ENCODE measurements at regions of chr11 and their contacts with region 1.

Region 1: DNA sequence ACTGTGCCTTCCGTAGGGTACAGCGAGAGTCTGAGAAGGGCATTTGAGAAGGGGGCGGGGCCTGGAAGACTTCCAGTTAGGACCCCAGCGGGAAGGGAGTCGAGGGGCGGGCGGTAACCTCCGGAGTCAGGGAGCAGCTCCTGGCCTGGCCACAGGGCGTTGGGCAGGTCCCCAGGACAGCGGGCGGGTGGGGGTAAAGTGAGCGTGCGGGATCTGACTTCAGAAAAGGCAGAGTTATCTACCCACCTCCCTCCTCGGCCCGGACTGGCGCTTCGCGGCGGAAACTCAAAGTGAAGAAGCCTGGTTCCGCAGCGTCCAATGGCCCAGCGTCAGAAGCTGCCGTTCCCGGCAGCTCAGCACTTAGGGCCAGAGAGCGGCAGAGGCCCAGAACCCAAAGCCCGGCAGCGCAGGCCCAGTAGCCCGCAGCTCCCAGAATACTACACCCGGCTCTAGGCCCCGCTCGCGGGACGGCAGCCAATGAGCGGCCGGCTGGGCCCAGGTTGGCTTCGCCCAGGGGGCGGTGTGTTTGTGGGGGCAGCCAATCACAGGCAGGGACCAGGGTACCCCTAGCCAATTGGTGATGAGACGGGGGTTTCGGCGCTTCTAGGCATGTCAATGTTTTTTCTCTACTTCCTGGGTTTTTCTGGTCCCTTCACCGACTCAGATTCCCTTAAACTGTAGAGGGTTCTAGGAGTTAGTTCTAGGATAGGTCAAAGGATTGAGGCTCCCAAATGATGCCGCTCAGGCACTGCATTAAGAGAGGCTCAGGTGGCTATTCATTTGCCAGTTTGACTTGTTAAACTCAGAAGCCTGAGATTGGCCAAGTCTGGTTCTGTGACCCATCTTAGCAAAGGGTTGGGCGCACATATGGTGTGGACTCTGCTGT is at the start of gene TRIM68:
- DNase-seq: peak; percentile 96
- H3K4me3 Mint-ChIP-seq: peak within 1 kb of the TSS; percentile 83
- H3K27ac Mint-ChIP-seq: peak within 1 kb of the TSS; percentile 80
- H3K4me1 Mint-ChIP-seq: peaks cover 40% of the 10 kb centered on the region
- H3K27me3 Mint-ChIP-seq: no peaks in the 10 kb centered on the region
- total RNA-seq, gene TRIM68: 11.6 to 12.7 TPM

Region 2: GRCh38 chr11:4560467-4560866 is 47.6 kb before region 1 on chr11:
- CTCF ChIA-PET with region 1: no interaction called
- POLR2A ChIA-PET with region 1: no interaction called
- DNase-seq: no peak
- H3K4me3 Mint-ChIP-seq: no peak overlapping the region
- H3K27ac Mint-ChIP-seq: no peak overlapping the region
- H3K4me1 Mint-ChIP-seq: no peaks in the 10 kb centered on the region
- H3K27me3 Mint-ChIP-seq: peaks cover 23% of the 10 kb centered on the region

Region 3: GRCh38 chr11:4626207-4627099 is 18.4 kb after region 1 on chr11:
- CTCF ChIA-PET with region 1: interaction called, 10 read pairs
- POLR2A ChIA-PET with region 1: no interaction called
- DNase-seq: peak; percentile 69
- H3K4me3 Mint-ChIP-seq: no peak overlapping the region
- H3K27ac Mint-ChIP-seq: no peak overlapping the region
- H3K4me1 Mint-ChIP-seq: no peaks in the 10 kb centered on the region
- H3K27me3 Mint-ChIP-seq: peaks cover 31% of the 10 kb centered on the region

Region 4: GRCh38 chr11:4713241-4713640 is 105.2 kb after region 1 on chr11:
- CTCF ChIA-PET with region 1: no interaction called
- POLR2A ChIA-PET with region 1: no interaction called
- DNase-seq: no peak
- H3K4me3 Mint-ChIP-seq: no peak overlapping the region
- H3K27ac Mint-ChIP-seq: no peak overlapping the region
- H3K4me1 Mint-ChIP-seq: no peaks in the 10 kb centered on the region
- H3K27me3 Mint-ChIP-seq: peaks cover 7% of the 10 kb centered on the region